Adrenal gland (tissue), 19 donors: ENCODE measurements at regions of chr6 and their contacts with region 1.

Region 1: DNA sequence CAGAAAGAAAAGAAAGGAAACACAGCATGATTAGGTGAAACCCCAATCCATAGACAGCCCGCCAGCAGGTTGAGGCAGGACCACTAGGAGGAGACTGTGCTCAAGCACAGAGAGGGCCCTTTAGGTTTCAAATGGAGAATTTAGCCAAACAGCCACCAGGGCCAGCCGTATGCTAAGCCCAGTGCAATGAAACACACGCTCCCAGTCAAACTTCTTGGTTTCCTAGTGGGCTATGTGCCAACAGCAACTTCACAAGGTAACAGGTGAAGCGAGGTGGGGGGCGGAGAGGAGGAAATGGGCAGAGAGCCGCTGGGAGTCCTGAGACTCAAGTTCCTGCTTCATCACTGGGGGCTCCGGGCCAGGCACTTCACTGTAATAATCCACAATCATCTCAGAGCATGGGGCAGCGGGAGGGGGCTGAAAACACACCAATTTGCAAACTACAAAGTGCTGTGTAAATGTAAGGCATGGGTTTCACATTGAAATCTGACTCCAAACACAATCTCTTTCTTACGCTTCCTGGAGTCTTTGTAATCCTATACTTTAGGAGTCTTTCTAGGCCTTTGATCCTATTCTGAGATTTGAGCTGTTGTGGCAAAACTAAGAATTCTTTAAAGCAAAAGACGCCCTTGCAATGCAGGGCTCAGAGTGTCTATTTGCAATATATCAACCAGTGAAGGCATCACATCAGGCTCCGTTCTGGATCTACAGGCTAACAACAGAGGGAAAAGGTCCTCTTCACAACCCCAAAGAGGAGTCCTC is 117.3 kb downstream of the OPRM1 start:
- DNase-seq: peak in 3 of 7 donors; percentile 10 to 20 (median 14)
- H3K4me3 ChIP-seq: no peak overlapping the region
- H3K27ac ChIP-seq: no peak overlapping the region
- H3K4me1 ChIP-seq: no peaks in the 10 kb centered on the region
- H3K27me3 ChIP-seq: no peaks in the 10 kb centered on the region
- CTCF ChIP-seq: peak in 4 of 6 experiments; percentile 16 to 42 (median 35)
- POLR2A ChIP-seq: no peak

Region 2: DNA sequence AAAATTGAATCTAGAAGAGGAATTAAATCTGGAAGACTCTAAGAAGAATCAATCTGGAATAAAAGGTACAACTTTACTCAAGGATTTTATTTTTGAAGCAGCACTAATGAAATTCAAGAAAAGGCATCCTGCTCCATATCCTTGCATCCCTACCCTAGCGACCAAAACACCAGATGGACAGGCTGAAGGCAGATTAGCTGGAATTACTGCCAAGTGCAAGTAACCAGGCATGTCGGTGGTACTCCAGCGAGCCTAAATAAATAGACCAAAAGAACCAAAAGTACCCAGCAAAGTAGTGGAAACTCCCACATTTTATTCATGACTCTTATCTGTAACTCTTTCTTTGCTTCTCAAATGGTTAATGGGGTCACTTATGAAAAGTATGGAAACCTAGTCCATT is 96.2 kb before region 1 on chr6:
- intact Hi-C with region 1: no loop called
- DNase-seq: no peak
- H3K4me3 ChIP-seq: no peak overlapping the region
- H3K27ac ChIP-seq: no peak overlapping the region
- H3K4me1 ChIP-seq: no peaks in the 10 kb centered on the region
- H3K27me3 ChIP-seq: no peaks in the 10 kb centered on the region
- CTCF ChIP-seq: no peak
- POLR2A ChIP-seq: no peak

Region 3: GRCh38 chr6:154276810-154277628 is 120.7 kb after region 1 on chr6:
- intact Hi-C with region 1: loop called (anchors 5 kb)
- DNase-seq: no peak
- H3K4me3 ChIP-seq: no peak overlapping the region
- H3K27ac ChIP-seq: no peak overlapping the region
- H3K4me1 ChIP-seq: peaks cover 0 to 3% of the 10 kb centered on the region in 2 donors
- H3K27me3 ChIP-seq: no peaks in the 10 kb centered on the region
- CTCF ChIP-seq: peak; percentile 49 to 78 (median 64)
- POLR2A ChIP-seq: no peak

Region 4: GRCh38 chr6:154370545-154370944 is 214.2 kb after region 1 on chr6:
- intact Hi-C with region 1: loop called in 1 of 2 experiments (anchors 5 kb)
- DNase-seq: peak; percentile 25 to 63 (median 36)
- H3K4me3 ChIP-seq: no peak overlapping the region
- H3K27ac ChIP-seq: no peak overlapping the region
- H3K4me1 ChIP-seq: peaks cover 0 to 9% of the 10 kb centered on the region in 2 donors
- H3K27me3 ChIP-seq: no peaks in the 10 kb centered on the region
- CTCF ChIP-seq: peak; percentile 19 to 52 (median 45)
- POLR2A ChIP-seq: no peak

Region 5: DNA sequence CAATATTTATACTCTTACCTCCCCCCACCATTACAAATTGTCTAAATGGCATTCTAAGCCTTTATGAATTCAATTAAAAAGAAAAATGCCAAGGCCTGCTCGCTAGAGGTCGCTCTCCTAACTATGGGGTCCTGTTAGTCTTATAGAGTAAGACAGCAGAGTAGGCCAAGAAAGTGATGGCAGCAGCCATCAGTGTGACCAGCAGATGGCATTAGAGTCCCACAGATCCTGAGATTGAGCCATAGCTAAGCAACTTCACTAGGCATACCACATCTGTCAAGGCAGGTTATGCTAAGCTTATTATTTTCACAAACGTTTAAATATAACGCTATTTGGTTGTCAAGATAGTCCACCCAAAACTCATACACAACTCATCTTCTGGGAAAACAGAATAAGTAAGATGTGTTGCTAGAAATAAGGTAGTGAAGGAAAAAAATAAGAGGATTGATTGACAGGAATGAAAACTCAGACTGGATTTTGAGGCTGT is 519.3 kb after region 1 on chr6:
- intact Hi-C with region 1: loop called in 1 of 2 experiments (anchors 10 kb)
- DNase-seq: peak; percentile 86 to 98 (median 90)
- H3K4me3 ChIP-seq: no peak overlapping the region
- H3K27ac ChIP-seq: no peak overlapping the region
- H3K4me1 ChIP-seq: no peaks in the 10 kb centered on the region
- H3K27me3 ChIP-seq: no peaks in the 10 kb centered on the region
- CTCF ChIP-seq: peak; percentile 97 to 100 (median 100)
- POLR2A ChIP-seq: no peak